Psoas muscle (tissue), 8 donors: ENCODE measurements at regions of chr10 and their contacts with region 1.

Region 1: GRCh38 chr10:94320285-94320914 is 42.3 kb downstream of the NOC3L start:
- DNase-seq: peak; percentile 57 to 71
- ATAC-seq: peak; percentile 54 to 83 (median 64)
- H3K4me3 ChIP-seq: no peak overlapping the region
- H3K27ac ChIP-seq: no peak overlapping the region
- H3K4me1 ChIP-seq: no peaks in the 10 kb centered on the region
- H3K27me3 ChIP-seq: no peaks in the 10 kb centered on the region
- CTCF ChIP-seq: peak; percentile 93

Region 2: GRCh38 chr10:94076321-94076841 is 244.0 kb before region 1 on chr10:
- intact Hi-C with region 1: loop called (anchors 5 to 10 kb)
- DNase-seq: no peak
- ATAC-seq: peak; percentile 56 to 86 (median 60)
- H3K4me3 ChIP-seq: no peak overlapping the region
- H3K27ac ChIP-seq: no peak overlapping the region
- H3K4me1 ChIP-seq: peaks cover 13% of the 10 kb centered on the region
- H3K27me3 ChIP-seq: no peaks in the 10 kb centered on the region
- CTCF ChIP-seq: peak; percentile 54